ENCODE measurements at regions of chr2 and their contacts with region 1.

Region 1: DNA sequence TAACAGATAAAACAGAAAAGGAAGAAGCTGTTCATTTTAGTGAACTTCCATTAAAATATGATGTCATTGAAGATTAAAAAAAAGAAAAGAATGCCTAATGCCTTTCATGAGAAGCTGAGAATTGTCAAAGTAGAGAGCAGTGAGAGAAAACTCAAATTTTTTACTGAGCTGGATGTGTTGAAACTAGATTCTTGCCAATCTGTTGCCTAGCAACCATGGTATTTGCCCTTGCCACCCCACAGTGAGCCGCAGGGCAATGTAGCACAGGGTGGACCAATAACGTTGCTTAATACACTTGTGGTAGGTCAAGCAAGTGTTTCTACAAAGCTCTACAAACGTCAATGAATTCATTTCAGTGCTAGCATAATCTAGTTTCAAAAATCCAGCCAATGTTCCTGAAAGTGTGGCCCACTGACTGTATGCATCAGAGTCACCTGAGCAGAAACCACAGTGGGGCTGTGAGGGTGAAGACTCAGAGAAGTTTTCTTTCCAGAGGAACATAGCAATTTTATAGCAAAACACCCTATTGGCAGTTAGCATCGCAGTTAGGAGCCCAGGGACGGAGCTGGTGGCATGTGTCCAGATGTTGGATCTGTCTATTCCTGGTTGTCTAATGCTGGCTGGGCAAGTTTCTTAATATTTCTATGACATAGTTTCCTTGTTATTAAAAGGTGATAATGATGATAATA is 132.2 kb downstream of the DOCK10 start:
- DNase-seq: peak; percentile 35 to 82
- H3K4me3 ChIP-seq: no peak overlapping the region
- H3K27ac ChIP-seq: peak overlapping the region in 4 of 5 donors; percentile 13 to 55 (median 50)
- H3K4me1 ChIP-seq: peaks cover 8 to 21% (median 12%) of the 10 kb centered on the region in 4 donors
- H3K27me3 ChIP-seq: no peaks in the 10 kb centered on the region
- CTCF ChIP-seq: no peak
- EP300 ChIP-seq: no peak
- POLR2A ChIP-seq: no peak

Region 2: GRCh38 chr2:224678634-224679263 is 231.3 kb before region 1 on chr2:
- intact Hi-C with region 1: no loop called
- DNase-seq: no peak
- H3K4me3 ChIP-seq: no peak overlapping the region
- H3K27ac ChIP-seq: no peak overlapping the region
- H3K4me1 ChIP-seq: no peaks in the 10 kb centered on the region
- H3K27me3 ChIP-seq: no peaks in the 10 kb centered on the region
- CTCF ChIP-seq: no peak
- EP300 ChIP-seq: no peak
- POLR2A ChIP-seq: no peak

Region 3: DNA sequence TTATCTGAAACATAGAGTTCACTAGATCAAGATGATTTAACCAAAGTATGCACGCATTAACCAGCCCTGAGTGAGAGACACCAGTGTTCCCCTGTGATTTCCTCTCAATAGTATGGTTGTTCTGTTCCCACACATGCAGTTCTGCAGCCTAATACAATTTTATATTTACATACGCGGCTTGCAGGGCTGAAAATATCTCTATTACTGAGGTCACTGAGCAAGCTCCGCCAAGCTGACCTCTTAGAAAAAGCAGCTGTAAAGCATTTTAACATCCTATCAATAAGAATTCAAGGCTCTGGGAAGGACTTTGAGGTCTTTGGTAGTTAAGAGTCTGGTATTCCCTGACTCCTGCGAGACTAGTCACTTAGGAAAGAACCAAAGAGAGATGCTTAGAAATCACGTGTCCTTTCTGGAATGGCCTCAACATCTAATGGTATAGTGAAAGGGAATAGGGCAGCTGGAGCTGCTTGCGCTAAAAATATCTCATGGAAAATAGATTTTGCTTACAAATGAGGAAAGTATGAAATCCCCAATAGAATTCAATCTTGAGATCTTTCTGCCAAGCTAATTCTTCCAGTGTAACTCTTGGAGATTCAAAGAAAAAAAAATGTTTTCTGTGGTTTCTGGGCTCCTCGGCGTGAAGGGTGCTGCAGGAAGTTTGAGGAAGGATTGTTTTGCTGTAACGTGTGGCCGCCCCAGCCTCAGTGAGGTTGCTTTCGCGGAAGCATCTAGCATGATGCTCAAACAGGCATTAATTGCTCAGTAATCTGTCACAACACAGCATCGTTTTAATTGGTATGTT is 73.1 kb after region 1 on chr2:
- intact Hi-C with region 1: loop called (anchors 10 kb)
- DNase-seq: peak; percentile 31 to 89
- H3K4me3 ChIP-seq: peak overlapping the region; percentile 14 to 38 (median 22)
- H3K27ac ChIP-seq: peak overlapping the region in 4 of 5 donors; percentile 47 to 73 (median 65)
- H3K4me1 ChIP-seq: peaks cover 0 to 27% (median 13%) of the 10 kb centered on the region in 4 donors
- H3K27me3 ChIP-seq: no peaks in the 10 kb centered on the region
- CTCF ChIP-seq: no peak
- EP300 ChIP-seq: no peak
- POLR2A ChIP-seq: no peak